Activated CD4-positive, alpha-beta memory T cell treated with anti-CD3 and anti-CD28 coated beads for 36 hours (primary cell): ENCODE measurements at regions of chr16 and their contacts with region 1.

Region 1: DNA sequence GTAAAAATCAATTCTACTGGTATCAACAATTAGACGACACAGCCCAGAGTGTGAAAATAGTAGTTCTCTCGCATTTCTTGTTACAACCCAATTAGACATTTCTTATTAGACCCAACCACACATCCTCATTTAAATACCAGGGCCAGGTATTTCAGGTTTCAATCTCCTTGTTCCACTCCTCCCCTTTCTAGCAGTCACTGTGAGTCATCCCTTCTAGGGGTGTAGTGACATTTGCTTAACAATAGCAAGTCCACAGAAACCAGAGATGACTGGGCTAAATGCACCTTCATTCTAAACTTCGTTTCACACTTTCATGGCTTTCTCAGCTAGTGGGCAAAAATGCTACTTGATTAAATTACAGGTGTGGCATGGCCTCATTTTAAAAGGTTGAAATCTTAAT is 116.9 kb upstream of the CACNG3 start:
- DNase-seq: peak; percentile 26
- H3K4me3 Mint-ChIP-seq: no peak overlapping the region
- H3K27ac Mint-ChIP-seq: peak overlapping the region; percentile 3
- H3K4me1 Mint-ChIP-seq: peaks cover 22% of the 10 kb centered on the region
- H3K27me3 Mint-ChIP-seq: no peaks in the 10 kb centered on the region

Region 2: GRCh38 chr16:24075931-24076716 is 63.2 kb before region 1 on chr16:
- CTCF ChIA-PET with region 1: interaction called, 9 read pairs
- POLR2A ChIA-PET with region 1: no interaction called
- intact Hi-C with region 1: loop called (anchors 1 kb)
- DNase-seq: peak; percentile 61
- H3K4me3 Mint-ChIP-seq: no peak overlapping the region
- H3K27ac Mint-ChIP-seq: no peak overlapping the region
- H3K4me1 Mint-ChIP-seq: peaks cover 35% of the 10 kb centered on the region
- H3K27me3 Mint-ChIP-seq: no peaks in the 10 kb centered on the region

Region 3: DNA sequence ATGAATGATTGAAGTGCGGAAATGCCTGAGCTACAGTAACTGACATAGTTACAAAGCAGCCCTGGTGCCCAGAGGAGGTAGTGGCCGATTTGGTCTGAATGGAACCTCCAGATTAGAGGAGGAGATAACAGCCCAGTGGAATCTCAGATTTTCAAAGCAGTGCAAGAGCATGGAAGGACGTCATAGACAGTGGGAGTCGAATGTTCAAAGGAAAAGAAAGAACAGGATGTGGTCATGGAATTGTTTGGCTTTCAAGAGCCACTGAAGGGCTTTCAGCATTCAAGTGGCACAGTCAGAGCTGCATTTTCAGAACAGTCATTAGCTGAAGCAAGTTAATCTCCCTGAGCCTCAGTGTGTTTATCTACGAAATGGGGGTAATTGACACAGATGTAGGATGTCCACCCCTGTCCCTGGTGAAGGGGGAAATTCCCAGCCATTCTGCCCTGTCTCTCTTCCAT is 12.2 kb after region 1 on chr16:
- CTCF ChIA-PET with region 1: interaction called, 3 read pairs
- POLR2A ChIA-PET with region 1: no interaction called
- intact Hi-C with region 1: loop called (anchors 1 kb)
- DNase-seq: peak; percentile 26
- H3K4me3 Mint-ChIP-seq: no peak overlapping the region
- H3K27ac Mint-ChIP-seq: peak overlapping the region; percentile 43
- H3K4me1 Mint-ChIP-seq: peaks cover 47% of the 10 kb centered on the region
- H3K27me3 Mint-ChIP-seq: no peaks in the 10 kb centered on the region

Region 4: GRCh38 chr16:24163935-24164334 is 24.7 kb after region 1 on chr16:
- CTCF ChIA-PET with region 1: no interaction called
- POLR2A ChIA-PET with region 1: no interaction called
- intact Hi-C with region 1: no loop called
- DNase-seq: no peak
- H3K4me3 Mint-ChIP-seq: no peak overlapping the region
- H3K27ac Mint-ChIP-seq: no peak overlapping the region
- H3K4me1 Mint-ChIP-seq: peaks cover 6% of the 10 kb centered on the region
- H3K27me3 Mint-ChIP-seq: no peaks in the 10 kb centered on the region